ENCODE measurements at regions of chr3 and their contacts with region 1.

Region 1: GRCh38 chr3:120348981-120349818 is at the start of gene LRRC58:
- DNase-seq: peak; percentile 91
- H3K4me3 ChIP-seq: peak within 1 kb of the TSS; percentile 42 to 85 (median 68)
- H3K27ac ChIP-seq: peak within 1 kb of the TSS; percentile 87 to 96 (median 91)
- H3K4me1 ChIP-seq: peaks cover 3 to 41% (median 14%) of the 10 kb centered on the region in 4 donors
- H3K27me3 ChIP-seq: no peaks in the 10 kb centered on the region
- CTCF ChIP-seq: peak in 2 of 5 experiments; percentile 29 to 30
- EP300 ChIP-seq: no peak
- POLR2A ChIP-seq: peak; percentile 87
- total RNA-seq, gene LRRC58: 7.9 to 23.2 (median 15.2) TPM

Region 2: GRCh38 chr3:119498186-119498987 is 850.8 kb before region 1 on chr3 and contains the start of gene TIMMDC1:
- in situ Hi-C with region 1: loop called in 1 of 4 experiments (anchors 25 kb)
- intact Hi-C with region 1: no loop called
- DNase-seq: peak; percentile 98
- H3K4me3 ChIP-seq: peak within 1 kb of the TSS; percentile 59 to 93 (median 78)
- H3K27ac ChIP-seq: peak within 1 kb of the TSS; percentile 92 to 99 (median 96)
- H3K4me1 ChIP-seq: peaks cover 20 to 38% (median 25%) of the 10 kb centered on the region in 4 donors
- H3K27me3 ChIP-seq: no peaks in the 10 kb centered on the region
- CTCF ChIP-seq: no peak
- EP300 ChIP-seq: no peak
- POLR2A ChIP-seq: peak; percentile 93
- total RNA-seq, gene TIMMDC1: 25.7 to 50.8 (median 35.0) TPM

Region 3: GRCh38 chr3:120095226-120095978 is 253.8 kb before region 1 on chr3:
- in situ Hi-C with region 1: no loop called
- intact Hi-C with region 1: loop called (anchors 5 kb)
- DNase-seq: peak; percentile 93
- H3K4me3 ChIP-seq: peak overlapping the region; percentile 60 to 86 (median 80)
- H3K27ac ChIP-seq: peak overlapping the region; percentile 98 to 100 (median 99)
- H3K4me1 ChIP-seq: peaks cover 3 to 31% (median 23%) of the 10 kb centered on the region in 4 donors
- H3K27me3 ChIP-seq: no peaks in the 10 kb centered on the region
- CTCF ChIP-seq: no peak
- EP300 ChIP-seq: no peak
- POLR2A ChIP-seq: peak; percentile 99

Region 4: DNA sequence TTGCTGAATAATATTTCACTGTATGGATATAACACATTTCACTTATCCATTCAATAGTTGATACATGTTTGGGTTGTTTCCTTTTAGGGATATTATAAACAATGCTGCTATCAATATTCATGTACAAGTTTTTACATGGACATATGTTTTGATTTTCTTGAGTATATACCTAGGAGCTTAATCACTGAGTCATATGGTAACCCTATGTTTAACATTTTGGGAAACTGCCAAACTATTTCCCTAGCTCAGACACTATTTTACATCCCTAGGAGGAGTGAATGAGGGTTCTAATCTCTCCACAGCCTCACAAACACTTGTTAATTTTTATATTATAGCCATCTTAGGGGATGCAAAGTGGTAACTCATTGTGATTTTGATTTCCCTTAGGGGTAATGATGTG is 130.2 kb before region 1 on chr3:
- in situ Hi-C with region 1: no loop called
- intact Hi-C with region 1: no loop called
- DNase-seq: no peak
- H3K4me3 ChIP-seq: no peak overlapping the region
- H3K27ac ChIP-seq: no peak overlapping the region
- H3K4me1 ChIP-seq: no peaks in the 10 kb centered on the region
- H3K27me3 ChIP-seq: no peaks in the 10 kb centered on the region
- CTCF ChIP-seq: no peak
- EP300 ChIP-seq: no peak
- POLR2A ChIP-seq: no peak